ENCODE measurements at regions of chr2 and their contacts with region 1.

Region 1: GRCh38 chr2:61470965-61471904 is at the start of gene USP34:
- DNase-seq: peak; percentile 91
- H3K4me3 Mint-ChIP-seq: peak within 1 kb of the TSS; percentile 92
- H3K27ac Mint-ChIP-seq: peak within 1 kb of the TSS; percentile 93
- H3K4me1 Mint-ChIP-seq: peaks cover 24% of the 10 kb centered on the region
- H3K27me3 Mint-ChIP-seq: no peaks in the 10 kb centered on the region
- total RNA-seq, gene USP34: 87.4 and 89.3 TPM in 2 replicates

Region 2: GRCh38 chr2:61426267-61426897 is 44.9 kb before region 1 on chr2:
- intact Hi-C with region 1: loop called (anchors 1 kb)
- DNase-seq: peak; percentile 57
- H3K4me3 Mint-ChIP-seq: no peak overlapping the region
- H3K27ac Mint-ChIP-seq: no peak overlapping the region
- H3K4me1 Mint-ChIP-seq: peaks cover 42% of the 10 kb centered on the region
- H3K27me3 Mint-ChIP-seq: no peaks in the 10 kb centered on the region